Upper lobe of right lung (tissue), 1 donor: ENCODE measurements at regions of chr12 and their contacts with region 1.

Region 1: DNA sequence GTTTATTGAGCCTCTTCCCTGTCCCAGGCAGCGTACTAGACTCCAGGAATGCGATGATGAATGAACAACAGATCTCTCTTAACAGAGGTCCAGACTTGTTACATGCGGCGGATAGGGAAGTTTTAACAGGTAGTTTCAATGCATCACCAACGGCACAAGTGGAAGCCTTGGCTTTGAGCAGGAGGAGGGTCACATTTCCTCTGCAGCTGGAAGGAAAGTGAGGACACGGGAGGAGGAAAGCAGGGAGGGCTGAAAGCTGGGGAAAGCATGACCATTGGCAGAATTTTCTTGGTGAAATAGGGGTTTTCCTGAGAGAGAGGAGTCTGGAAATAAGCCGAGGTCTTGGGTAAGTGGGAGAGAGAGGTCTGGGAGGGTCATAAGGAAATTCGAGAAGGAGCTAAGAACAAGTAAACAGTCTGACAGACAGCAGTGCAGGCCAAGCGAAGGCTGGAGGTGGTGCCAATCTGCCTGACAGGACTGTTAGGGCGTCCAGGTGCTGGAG is 15.4 kb downstream of the BHLHE41 start:
- DNase-seq: no peak
- ATAC-seq: no peak
- H3K4me3 ChIP-seq: no peak overlapping the region
- H3K27ac ChIP-seq: peak overlapping the region; percentile 33
- H3K4me1 ChIP-seq: peaks cover 6% of the 10 kb centered on the region
- H3K27me3 ChIP-seq: no peaks in the 10 kb centered on the region
- CTCF ChIP-seq: no peak

Region 2: DNA sequence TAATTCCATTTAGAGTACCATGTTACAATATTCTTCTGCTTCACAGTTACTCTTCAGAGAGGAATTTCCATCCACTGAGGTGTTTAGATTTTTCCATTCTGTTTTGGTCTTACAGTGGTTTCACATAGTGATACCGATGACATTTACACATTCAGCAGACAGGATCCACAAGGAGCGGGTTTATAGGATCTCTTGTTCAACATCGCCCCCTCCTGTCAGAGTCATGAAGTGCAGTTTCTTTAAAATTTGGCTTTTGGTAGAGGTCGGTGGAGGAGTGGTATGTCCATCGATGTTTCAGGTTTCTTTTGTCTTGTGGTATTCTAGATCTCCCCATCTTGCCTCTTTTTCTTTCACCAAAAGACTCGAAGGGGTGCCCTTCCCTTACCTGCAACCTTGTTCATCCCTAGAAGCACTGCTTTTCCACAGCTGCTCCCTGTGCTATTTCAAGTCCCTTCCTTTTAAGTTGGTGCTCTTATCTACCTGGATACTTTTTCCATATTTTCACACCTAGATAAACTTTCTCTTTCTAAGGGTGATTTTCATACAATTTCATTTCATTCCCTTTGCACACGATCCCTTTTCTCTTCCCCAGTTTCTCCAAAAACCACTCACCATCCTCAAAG is 542.3 kb after region 1 on chr12:
- intact Hi-C with region 1: loop called (anchors 10 kb)
- DNase-seq: no peak
- ATAC-seq: peak; percentile 85
- H3K4me3 ChIP-seq: no peak overlapping the region
- H3K27ac ChIP-seq: no peak overlapping the region
- H3K4me1 ChIP-seq: no peaks in the 10 kb centered on the region
- H3K27me3 ChIP-seq: no peaks in the 10 kb centered on the region
- CTCF ChIP-seq: peak; percentile 70